Transverse colon (tissue), 4 donors: ENCODE measurements at regions of chr3 and their contacts with region 1.

Region 1: DNA sequence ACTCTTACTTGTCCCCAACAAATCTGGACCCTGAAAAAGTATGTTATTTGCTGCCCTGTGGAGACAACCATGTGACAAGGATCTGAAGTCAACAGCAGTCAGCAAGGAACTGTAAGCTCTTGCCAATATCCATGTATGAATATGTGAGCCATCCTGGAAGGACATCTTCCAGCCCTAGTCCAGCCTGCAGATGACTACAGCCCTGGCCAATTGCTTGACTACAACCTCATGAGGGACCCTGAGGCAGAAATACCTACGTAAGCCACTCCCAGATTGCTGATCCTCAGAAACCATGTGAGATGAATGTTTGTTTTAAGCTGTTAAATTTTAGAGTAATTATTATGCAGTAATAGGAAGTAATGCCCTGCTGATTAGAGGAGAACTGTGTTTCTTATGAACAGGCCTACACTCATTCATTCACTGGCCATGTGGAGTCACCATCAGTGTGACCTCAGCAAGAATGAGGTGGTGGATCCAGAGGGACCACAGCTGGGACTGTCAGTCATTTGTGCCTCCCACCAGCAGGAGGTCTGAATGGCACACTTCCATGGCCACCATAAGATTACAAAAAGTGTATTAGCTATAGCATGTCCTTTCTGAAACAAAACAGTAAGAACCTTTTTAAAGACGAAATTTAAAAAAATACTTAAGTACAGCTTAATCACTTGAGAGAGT is 92.6 kb downstream of the TFDP2 start:
- DNase-seq: no peak
- H3K4me3 ChIP-seq: no peak overlapping the region
- H3K27ac ChIP-seq: no peak overlapping the region
- H3K4me1 ChIP-seq: no peaks in the 10 kb centered on the region
- H3K27me3 ChIP-seq: no peaks in the 10 kb centered on the region
- CTCF ChIP-seq: no peak
- EP300 ChIP-seq: no peak
- POLR2A ChIP-seq: no peak

Region 2: DNA sequence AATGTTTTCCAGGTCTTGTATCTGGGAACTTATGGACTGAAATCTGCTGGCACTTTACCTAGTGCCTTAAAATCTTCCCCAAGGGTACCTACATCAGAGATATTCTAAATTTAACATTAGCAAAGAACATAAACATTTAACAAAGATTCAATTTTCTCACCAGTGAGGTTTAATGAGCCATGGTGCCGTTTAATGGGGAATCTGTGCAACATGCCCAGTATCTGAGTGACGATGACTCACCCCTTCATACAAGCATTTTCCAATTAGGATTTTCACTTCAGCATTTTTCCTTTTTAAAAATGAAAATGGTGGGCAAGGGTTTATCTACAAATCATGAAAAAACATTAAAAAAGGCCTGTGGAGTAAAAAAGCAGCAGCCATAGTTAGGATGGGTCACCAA is 1602.1 kb after region 1 on chr3:
- in situ Hi-C with region 1: no loop called
- intact Hi-C with region 1: no loop called
- DNase-seq: no peak
- H3K4me3 ChIP-seq: no peak overlapping the region
- H3K27ac ChIP-seq: no peak overlapping the region
- H3K4me1 ChIP-seq: no peaks in the 10 kb centered on the region
- H3K27me3 ChIP-seq: no peaks in the 10 kb centered on the region
- CTCF ChIP-seq: no peak
- EP300 ChIP-seq: no peak
- POLR2A ChIP-seq: no peak

Region 3: GRCh38 chr3:143814443-143814889 is 1757.7 kb after region 1 on chr3:
- in situ Hi-C with region 1: no loop called
- intact Hi-C with region 1: loop called (anchors 10 kb)
- DNase-seq: no peak
- H3K4me3 ChIP-seq: no peak overlapping the region
- H3K27ac ChIP-seq: no peak overlapping the region
- H3K4me1 ChIP-seq: peaks cover 0 to 20% (median 5%) of the 10 kb centered on the region in 4 donors
- H3K27me3 ChIP-seq: no peaks in the 10 kb centered on the region
- CTCF ChIP-seq: no peak
- EP300 ChIP-seq: no peak
- POLR2A ChIP-seq: no peak